Ovary (tissue), 10 donors: ENCODE measurements at regions of chr17 and their contacts with region 1.

Region 1: DNA sequence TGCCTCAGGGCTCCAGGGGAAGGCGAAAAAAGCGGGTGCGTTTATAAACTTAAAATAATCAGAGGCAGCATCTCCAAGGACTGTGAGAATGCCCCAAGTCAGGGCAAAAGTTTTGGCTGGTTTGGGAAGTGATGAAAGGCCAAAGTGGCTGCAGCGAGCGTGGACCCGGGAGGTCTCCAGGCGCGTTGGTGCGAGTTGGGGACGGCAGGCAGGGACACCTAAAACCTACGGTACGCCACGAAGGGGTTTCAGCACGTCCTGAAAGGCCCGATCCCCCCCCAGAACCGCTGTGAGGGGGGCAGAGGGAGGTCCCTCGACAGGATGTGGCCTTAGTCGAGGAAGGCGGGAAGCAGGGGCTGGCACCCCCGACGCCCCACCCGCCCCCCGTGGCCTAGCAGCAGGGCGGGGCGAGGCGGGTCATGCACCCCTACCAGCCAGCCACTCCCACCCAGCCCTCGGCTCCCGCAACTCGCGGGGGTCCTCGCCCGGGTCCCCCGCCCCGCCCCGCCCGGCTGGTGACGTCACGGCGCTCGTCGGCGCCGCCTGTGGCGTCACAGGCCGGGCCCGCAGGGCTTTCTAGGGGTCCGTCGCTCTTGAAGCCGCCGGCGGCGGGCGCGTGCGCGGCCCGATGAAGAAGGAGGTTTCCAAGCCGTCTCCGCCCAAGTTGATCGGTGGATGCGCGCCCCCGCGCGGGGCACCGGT is at the start of gene MYCBPAP:
- DNase-seq: peak; percentile 78 to 89 (median 83)
- H3K4me3 ChIP-seq: peak within 1 kb of the TSS; percentile 61
- H3K27ac ChIP-seq: peak within 1 kb of the TSS; percentile 58 to 73
- H3K4me1 ChIP-seq: peaks cover 12% of the 10 kb centered on the region
- H3K27me3 ChIP-seq: no peaks in the 10 kb centered on the region
- CTCF ChIP-seq: no peak
- EP300 ChIP-seq: peak; percentile 13
- POLR2A ChIP-seq: peak; percentile 17
- total RNA-seq, gene MYCBPAP: 2.5 to 8.1 (median 4.5) TPM

Region 2: GRCh38 chr17:50352072-50352692 is 155.8 kb before region 1 on chr17:
- intact Hi-C with region 1: no loop called
- DNase-seq: peak; percentile 42 to 78 (median 62)
- H3K4me3 ChIP-seq: no peak overlapping the region
- H3K27ac ChIP-seq: no peak overlapping the region
- H3K4me1 ChIP-seq: peaks cover 12% of the 10 kb centered on the region
- H3K27me3 ChIP-seq: no peaks in the 10 kb centered on the region
- CTCF ChIP-seq: no peak
- EP300 ChIP-seq: no peak
- POLR2A ChIP-seq: no peak

Region 3: GRCh38 chr17:50541716-50542688 is 34.0 kb after region 1 on chr17:
- intact Hi-C with region 1: loop called in 1 of 4 experiments (anchors 5 kb)
- DNase-seq: peak; percentile 89 to 92 (median 90)
- H3K4me3 ChIP-seq: peak overlapping the region; percentile 52
- H3K27ac ChIP-seq: peak overlapping the region; percentile 15 to 77
- H3K4me1 ChIP-seq: peaks cover 6% of the 10 kb centered on the region
- H3K27me3 ChIP-seq: no peaks in the 10 kb centered on the region
- CTCF ChIP-seq: peak in 1 of 3 donors; percentile 17
- EP300 ChIP-seq: no peak
- POLR2A ChIP-seq: peak; percentile 64